Activated CD8-positive, alpha-beta memory T cell treated with anti-CD3 and anti-CD28 coated beads, Interleukin-2, amount 10 ng/mL, durations not matched to agents 7 days and 5 days (primary cell): ENCODE measurements at regions of chr11 and their contacts with region 1.

Region 1: DNA sequence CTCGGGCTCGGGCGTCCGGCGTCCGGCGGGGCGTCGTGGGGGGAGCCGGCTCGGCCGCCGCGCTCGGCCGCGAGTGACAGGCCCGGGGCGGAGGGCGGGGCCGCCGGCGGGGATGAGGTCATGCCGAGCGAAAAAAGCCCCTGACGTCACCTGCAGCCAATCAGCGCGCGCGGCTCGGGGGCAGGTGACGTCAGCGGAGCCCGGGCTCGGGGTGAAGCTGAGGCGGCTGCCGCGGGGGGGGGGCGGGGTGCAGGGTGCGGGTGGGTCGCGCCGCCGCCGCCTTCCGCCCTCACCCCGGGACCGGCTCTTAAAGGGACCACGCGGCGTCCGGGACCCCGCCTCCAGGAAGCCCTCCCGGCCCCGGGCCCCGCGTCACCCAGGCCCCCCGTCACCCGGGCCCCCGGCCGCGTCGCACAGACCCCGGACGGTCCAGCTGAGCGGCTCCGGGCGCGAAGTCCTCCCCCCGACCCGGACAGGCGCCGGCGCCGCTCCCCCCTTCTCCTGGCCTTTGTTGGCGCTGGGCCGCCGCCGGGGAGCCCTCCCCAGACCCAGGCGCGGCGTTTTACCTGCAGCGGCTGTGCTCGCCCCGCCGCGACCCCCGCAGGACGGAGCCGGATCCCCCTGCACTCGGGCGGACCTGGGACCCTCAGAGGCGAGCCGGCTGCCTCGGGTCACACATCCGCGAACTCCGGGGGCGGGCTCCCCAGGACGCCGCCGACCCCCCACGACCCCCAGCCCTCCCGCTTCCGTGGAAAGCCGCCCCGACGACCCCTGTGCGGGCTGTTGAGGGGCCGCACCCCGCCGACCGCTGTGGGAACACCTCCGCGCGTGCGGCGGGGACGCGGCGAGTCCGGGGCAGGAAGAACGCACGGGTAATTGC is at the start of gene DUSP8:
- DNase-seq: peak; percentile 91
- ATAC-seq: peak; percentile 82
- H3K4me3 Mint-ChIP-seq: no peak within 1 kb of the TSS
- H3K27ac Mint-ChIP-seq: no peak within 1 kb of the TSS
- H3K4me1 Mint-ChIP-seq: peaks cover 8% of the 10 kb centered on the region
- H3K27me3 Mint-ChIP-seq: peaks cover 27% of the 10 kb centered on the region
- total RNA-seq, gene DUSP8: 0.50 to 1.1 TPM

Region 2: DNA sequence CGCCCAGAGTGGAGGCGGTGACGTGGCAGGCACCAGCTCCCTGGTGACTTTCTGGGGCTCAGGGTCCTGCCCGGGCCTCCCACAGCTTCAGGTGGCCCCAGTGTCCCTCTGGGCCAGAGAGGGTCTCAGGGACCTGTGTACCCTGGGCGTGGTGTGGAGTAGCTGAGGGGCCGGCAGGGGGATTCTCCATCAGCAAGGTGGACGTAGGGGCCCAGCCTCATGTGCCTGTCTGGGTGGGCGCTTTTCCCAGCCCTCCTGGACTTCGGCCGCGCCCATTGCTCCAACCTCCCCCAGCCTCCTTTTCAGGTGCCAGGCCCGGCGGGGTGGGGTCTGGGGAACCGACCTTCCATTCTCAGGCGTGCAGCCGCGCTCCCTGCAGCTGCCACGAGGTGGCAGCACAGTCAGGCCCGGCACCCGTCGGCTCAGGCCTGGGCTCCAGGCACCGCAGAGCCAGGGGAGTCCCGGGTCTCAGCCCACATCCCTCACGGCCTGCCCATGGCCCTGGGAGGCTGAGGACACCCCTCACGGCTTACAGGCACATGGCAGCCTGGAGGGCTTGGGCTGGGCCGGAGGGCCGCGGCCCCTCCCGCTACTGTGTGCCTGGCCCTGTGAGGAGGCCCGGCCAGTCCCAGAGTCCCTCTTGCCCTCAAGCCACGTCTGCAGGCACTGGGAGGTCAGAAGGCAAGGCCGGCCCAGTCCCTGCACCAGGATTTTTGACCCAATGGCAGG is 369.5 kb before region 1 on chr11:
- CTCF ChIA-PET with region 1: interaction called, 24 read pairs
- DNase-seq: peak; percentile 58
- ATAC-seq: peak; percentile 80
- H3K4me3 Mint-ChIP-seq: no peak overlapping the region
- H3K27ac Mint-ChIP-seq: no peak overlapping the region
- H3K4me1 Mint-ChIP-seq: no peaks in the 10 kb centered on the region
- H3K27me3 Mint-ChIP-seq: no peaks in the 10 kb centered on the region

Region 3: GRCh38 chr11:1515082-1516060 is 57.1 kb before region 1 on chr11:
- CTCF ChIA-PET with region 1: interaction called, 13 read pairs
- DNase-seq: peak; percentile 71
- ATAC-seq: peak; percentile 72
- H3K4me3 Mint-ChIP-seq: no peak overlapping the region
- H3K27ac Mint-ChIP-seq: no peak overlapping the region
- H3K4me1 Mint-ChIP-seq: peaks cover 8% of the 10 kb centered on the region
- H3K27me3 Mint-ChIP-seq: no peaks in the 10 kb centered on the region

Region 4: DNA sequence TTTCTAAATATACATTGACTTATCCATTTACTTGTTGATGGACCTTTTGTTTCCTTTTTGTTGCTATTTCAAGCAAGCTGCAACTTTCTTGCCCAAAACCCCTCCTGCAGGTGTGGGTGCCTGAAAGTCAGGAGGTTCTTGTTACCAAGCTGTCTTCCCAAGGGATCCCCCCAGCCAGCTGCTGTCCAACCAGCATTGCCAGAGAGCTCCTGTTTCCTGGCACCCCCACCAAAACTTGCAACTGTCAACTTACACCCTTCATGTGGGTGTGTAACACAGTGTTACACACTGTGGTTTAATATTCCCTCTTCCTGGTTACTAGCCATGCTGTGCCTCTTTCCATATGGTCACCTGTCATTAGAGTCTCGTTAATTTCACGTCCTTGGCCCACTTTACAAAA is 14.3 kb after region 1 on chr11:
- CTCF ChIA-PET with region 1: interaction called, 47 read pairs
- DNase-seq: no peak
- ATAC-seq: no peak
- H3K4me3 Mint-ChIP-seq: no peak overlapping the region
- H3K27ac Mint-ChIP-seq: no peak overlapping the region
- H3K4me1 Mint-ChIP-seq: peaks cover 11% of the 10 kb centered on the region
- H3K27me3 Mint-ChIP-seq: peaks cover 16% of the 10 kb centered on the region

Region 5: DNA sequence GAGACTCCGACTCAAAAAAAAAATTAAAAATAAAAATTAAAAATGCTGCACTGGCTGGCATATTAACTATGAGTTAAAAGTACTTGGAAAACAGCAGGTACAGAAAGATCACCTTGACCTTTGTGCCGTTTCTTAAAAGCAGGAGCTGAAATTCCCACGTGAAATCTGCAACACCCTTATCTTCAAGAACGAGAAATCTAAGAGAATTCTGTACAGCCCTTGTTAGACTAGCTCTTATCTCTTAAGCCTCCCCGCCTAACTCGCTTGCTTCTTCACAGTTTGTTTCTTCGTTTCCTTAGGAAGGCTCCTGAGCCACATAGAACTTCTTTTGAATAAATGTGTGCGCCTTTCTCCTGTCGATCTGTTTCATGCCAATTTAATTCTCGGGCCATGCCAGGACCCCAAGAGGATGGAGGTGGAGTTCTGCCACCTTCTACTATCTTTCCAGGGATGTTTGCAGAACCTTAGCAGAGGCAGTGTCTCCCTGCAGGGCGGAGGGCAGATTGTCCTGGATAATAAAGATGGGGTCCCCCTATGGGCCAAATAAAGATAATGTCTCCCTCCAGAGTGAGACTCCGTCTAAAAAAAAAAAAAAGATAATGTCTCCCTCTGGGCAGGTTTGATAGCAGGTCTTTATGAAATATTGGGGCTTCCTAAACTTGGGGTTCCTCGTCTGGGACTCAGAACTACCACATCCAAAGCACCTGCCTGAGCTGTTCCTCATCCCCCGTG is 235.0 kb after region 1 on chr11:
- CTCF ChIA-PET with region 1: no interaction called
- DNase-seq: no peak
- ATAC-seq: no peak
- H3K4me3 Mint-ChIP-seq: no peak overlapping the region
- H3K27ac Mint-ChIP-seq: no peak overlapping the region
- H3K4me1 Mint-ChIP-seq: no peaks in the 10 kb centered on the region
- H3K27me3 Mint-ChIP-seq: peaks cover 43% of the 10 kb centered on the region